ENCODE measurements at regions of chr15 and their contacts with region 1.

Region 1: DNA sequence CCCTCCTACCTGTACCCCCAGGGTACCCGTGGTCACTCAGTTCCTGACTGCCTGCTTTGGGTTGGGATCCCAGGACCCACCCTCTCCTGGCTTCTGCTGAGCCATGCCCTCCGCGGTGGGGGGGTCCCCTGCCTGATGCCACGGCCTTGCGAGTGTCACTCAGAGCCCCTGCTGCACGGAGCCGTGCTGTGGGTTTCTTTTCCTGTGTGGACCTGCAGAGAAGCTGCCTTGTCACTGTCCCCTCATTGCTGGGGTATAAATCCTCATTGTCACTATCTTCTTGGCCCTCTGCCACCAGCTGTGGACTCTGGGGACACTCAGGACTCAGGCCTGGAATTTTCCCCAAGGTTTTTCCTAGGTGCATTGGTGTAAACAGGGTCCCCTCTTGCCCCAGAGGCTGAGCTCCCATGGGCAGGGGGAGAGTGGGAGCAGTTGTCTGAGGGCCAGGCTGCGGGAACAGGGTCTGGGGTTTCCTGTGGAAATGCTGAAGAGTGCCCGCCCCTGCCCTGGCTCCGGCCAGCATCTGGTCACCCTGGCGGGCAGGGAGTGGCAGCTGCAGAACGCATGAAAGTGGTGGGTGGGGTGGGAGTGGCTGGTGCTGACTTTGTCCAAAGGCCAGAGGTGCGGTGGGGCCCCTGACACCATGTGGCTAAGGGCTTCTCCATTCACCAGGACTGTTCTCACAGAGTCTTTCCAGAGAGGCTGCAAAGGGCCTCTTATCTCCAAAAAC is 191.7 kb downstream of the GOLGA6L6 start:
- DNase-seq: no peak
- ATAC-seq: peak; percentile 33

Region 2: DNA sequence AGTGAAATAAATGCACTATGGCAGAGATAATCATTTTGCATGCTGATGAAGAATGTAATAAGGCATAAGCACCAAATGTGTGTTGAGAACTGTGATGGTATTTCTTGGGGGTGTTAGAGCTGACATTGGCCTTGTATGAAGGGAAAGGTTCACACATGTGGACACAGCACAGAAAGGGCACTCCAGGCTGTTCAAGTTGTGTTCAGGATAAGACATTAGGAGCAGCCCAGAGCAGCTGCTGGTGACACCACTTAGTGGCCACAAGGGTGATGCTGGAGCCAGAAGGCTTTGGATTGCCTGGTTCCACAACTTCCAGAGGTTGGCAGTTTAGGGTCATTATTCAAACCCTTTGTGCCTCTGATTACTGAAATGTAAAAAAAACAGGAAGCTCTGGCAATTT is 36.3 kb after region 1 on chr15:
- intact Hi-C with region 1: loop called in 1 of 2 experiments (anchors 5 kb)
- DNase-seq: no peak
- ATAC-seq: no peak

Region 3: GRCh38 chr15:20409247-20409646 is 59.3 kb after region 1 on chr15:
- intact Hi-C with region 1: no loop called
- DNase-seq: no peak
- ATAC-seq: no peak